Natural killer cell (primary cell): ENCODE measurements at regions of chr2 and their contacts with region 1.

Region 1: GRCh38 chr2:84741296-84741765 is 139.6 kb downstream of the TRABD2A start:
- DNase-seq: peak; percentile 44 to 74
- ATAC-seq: peak; percentile 94 to 99 (median 97)
- H3K4me3 ChIP-seq: no peak overlapping the region
- H3K4me3 Mint-ChIP-seq: no peak overlapping the region
- H3K27ac ChIP-seq: peak overlapping the region; percentile 50
- H3K27ac Mint-ChIP-seq: peak overlapping the region; percentile 47 to 54
- H3K4me1 ChIP-seq: peaks cover 18% of the 10 kb centered on the region
- H3K4me1 Mint-ChIP-seq: peaks cover 6 to 10% of the 10 kb centered on the region in 2 donors
- H3K27me3 ChIP-seq: no peaks in the 10 kb centered on the region
- H3K27me3 Mint-ChIP-seq: peaks cover 0 to 3% of the 10 kb centered on the region in 2 donors
- CTCF ChIP-seq: peak; percentile 28

Region 2: GRCh38 chr2:84865181-84865783 is 124.0 kb after region 1 on chr2:
- intact Hi-C with region 1: loop called (anchors 1 kb)
- DNase-seq: peak in 1 of 2 donors; percentile 72
- ATAC-seq: peak; percentile 67 to 87 (median 85)
- H3K4me3 ChIP-seq: no peak overlapping the region
- H3K4me3 Mint-ChIP-seq: no peak overlapping the region
- H3K27ac ChIP-seq: no peak overlapping the region
- H3K27ac Mint-ChIP-seq: peak overlapping the region; percentile 75 to 80
- H3K4me1 ChIP-seq: peaks cover 9% of the 10 kb centered on the region
- H3K4me1 Mint-ChIP-seq: peaks cover 10 to 12% of the 10 kb centered on the region in 2 donors
- H3K27me3 ChIP-seq: no peaks in the 10 kb centered on the region
- H3K27me3 Mint-ChIP-seq: peaks cover 0 to 3% of the 10 kb centered on the region in 2 donors
- CTCF ChIP-seq: peak; percentile 77

Region 3: DNA sequence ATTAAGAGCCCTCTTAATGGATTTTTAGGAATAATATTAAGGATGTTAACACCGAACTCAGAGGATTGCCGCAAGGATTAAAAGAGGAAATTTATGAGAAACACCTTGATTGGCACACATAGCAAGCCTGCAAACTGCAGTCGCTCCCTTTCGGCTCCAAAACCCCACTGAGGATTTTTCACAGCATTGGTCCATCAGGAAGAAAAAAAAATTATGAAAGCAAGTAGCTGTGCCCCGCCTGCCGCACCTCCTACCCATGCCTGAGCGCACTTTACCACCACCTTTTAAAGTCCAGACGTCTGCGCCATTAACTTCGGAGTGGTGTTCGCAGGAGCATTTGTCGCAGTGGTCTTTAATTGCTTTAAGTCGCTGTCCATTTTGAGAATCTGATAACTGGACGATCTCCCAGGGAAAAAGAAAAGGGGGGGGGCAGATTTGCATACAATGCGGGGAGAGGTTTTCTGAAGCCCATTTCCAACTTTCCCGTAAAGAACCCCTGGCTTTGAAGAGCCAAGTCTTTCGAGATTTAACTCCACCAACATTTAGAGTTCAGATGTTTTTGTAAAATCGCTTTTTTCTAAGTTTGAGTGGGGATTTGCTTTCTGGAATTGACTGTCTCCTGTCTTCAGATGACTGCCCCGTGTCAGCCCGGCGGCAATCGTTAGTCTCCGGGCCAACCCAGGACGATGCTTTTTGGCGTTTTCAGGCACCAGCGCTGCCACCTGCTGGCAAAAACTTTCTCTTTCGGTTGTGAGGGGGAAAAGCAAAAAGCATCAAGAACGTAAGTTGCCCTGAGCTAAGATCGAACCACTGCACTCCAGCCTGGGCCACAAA is 140.5 kb after region 1 on chr2:
- intact Hi-C with region 1: loop called (anchors 1 kb)
- DNase-seq: peak; percentile 76 to 93
- ATAC-seq: peak; percentile 87 to 89 (median 88)
- H3K4me3 ChIP-seq: peak overlapping the region; percentile 55
- H3K4me3 Mint-ChIP-seq: peak overlapping the region; percentile 98
- H3K27ac ChIP-seq: peak overlapping the region; percentile 52
- H3K27ac Mint-ChIP-seq: peak overlapping the region; percentile 21 to 71
- H3K4me1 ChIP-seq: peaks cover 29% of the 10 kb centered on the region
- H3K4me1 Mint-ChIP-seq: peaks cover 34 to 37% of the 10 kb centered on the region in 2 donors
- H3K27me3 ChIP-seq: peaks cover 8% of the 10 kb centered on the region
- H3K27me3 Mint-ChIP-seq: peaks cover 9 to 24% of the 10 kb centered on the region in 2 donors
- CTCF ChIP-seq: peak; percentile 77